ENCODE measurements at regions of chr5 and their contacts with region 1.

Region 1: GRCh38 chr5:114449860-114450421 is 88.1 kb downstream of the KCNN2 start:
- DNase-seq: peak; percentile 63 to 89
- H3K4me3 ChIP-seq: no peak overlapping the region
- H3K27ac ChIP-seq: peak overlapping the region in 1 of 5 donors; percentile 6
- H3K4me1 ChIP-seq: peaks cover 0 to 11% (median 5%) of the 10 kb centered on the region in 4 donors
- H3K27me3 ChIP-seq: no peaks in the 10 kb centered on the region
- CTCF ChIP-seq: peak in 5 of 7 experiments; percentile 55 to 75 (median 69)
- EP300 ChIP-seq: no peak
- POLR2A ChIP-seq: no peak

Region 2: GRCh38 chr5:114101153-114101552 is 348.8 kb before region 1 on chr5:
- intact Hi-C with region 1: loop called (anchors 10 kb)
- DNase-seq: peak in 1 of 2 donors; percentile 41
- H3K4me3 ChIP-seq: no peak overlapping the region
- H3K27ac ChIP-seq: no peak overlapping the region
- H3K4me1 ChIP-seq: no peaks in the 10 kb centered on the region
- H3K27me3 ChIP-seq: no peaks in the 10 kb centered on the region
- CTCF ChIP-seq: peak in 5 of 7 experiments; percentile 10 to 58 (median 53)
- EP300 ChIP-seq: no peak
- POLR2A ChIP-seq: no peak

Region 3: GRCh38 chr5:115016646-115017045 is 566.7 kb after region 1 on chr5:
- intact Hi-C with region 1: no loop called
- DNase-seq: no peak
- H3K4me3 ChIP-seq: no peak overlapping the region
- H3K27ac ChIP-seq: no peak overlapping the region
- H3K4me1 ChIP-seq: no peaks in the 10 kb centered on the region
- H3K27me3 ChIP-seq: no peaks in the 10 kb centered on the region
- CTCF ChIP-seq: no peak
- EP300 ChIP-seq: no peak
- POLR2A ChIP-seq: no peak